AG04450 (cell line): ENCODE measurements at regions of chr6 and their contacts with region 1.

Region 1: GRCh38 chr6:22134305-22134704 is 162.5 kb downstream of the PRL start:
- DNase-seq: no peak
- H3K4me3 ChIP-seq: no peak overlapping the region
- H3K27ac ChIP-seq: no peak overlapping the region
- H3K27me3 ChIP-seq: no peaks in the 10 kb centered on the region
- CTCF ChIP-seq: no peak

Region 2: DNA sequence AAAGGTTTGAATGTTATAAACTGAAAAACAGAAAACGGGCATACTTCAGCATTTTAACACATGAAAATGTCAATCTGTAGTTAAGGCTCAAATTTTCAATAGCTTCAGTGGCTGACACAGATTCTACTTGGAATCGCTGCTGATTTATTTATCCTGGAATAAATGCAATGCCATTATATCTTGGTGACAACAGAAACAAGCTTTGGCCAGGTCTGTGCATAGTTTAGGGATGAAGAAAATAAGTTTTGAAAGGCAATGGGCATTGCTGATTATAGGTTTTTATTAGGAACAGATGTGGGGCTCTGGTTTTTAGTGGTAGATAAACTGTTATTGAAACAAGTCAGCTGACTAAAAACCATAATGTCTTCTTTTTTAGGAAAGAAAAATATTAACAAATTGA is 637.6 kb before region 1 on chr6:
- CTCF ChIA-PET with region 1: no interaction called
- POLR2A ChIA-PET with region 1: no interaction called
- DNase-seq: no peak
- H3K4me3 ChIP-seq: no peak overlapping the region
- H3K27ac ChIP-seq: no peak overlapping the region
- H3K27me3 ChIP-seq: peaks cover 2% of the 10 kb centered on the region
- CTCF ChIP-seq: no peak

Region 3: GRCh38 chr6:23349521-23350147 is 1215.3 kb after region 1 on chr6:
- CTCF ChIA-PET with region 1: interaction called, 11 read pairs
- POLR2A ChIA-PET with region 1: no interaction called
- DNase-seq: peak; percentile 68
- H3K4me3 ChIP-seq: no peak overlapping the region
- H3K27ac ChIP-seq: no peak overlapping the region
- H3K27me3 ChIP-seq: no peaks in the 10 kb centered on the region
- CTCF ChIP-seq: no peak